ENCODE measurements at regions of chr19 and their contacts with region 1.

Region 1: DNA sequence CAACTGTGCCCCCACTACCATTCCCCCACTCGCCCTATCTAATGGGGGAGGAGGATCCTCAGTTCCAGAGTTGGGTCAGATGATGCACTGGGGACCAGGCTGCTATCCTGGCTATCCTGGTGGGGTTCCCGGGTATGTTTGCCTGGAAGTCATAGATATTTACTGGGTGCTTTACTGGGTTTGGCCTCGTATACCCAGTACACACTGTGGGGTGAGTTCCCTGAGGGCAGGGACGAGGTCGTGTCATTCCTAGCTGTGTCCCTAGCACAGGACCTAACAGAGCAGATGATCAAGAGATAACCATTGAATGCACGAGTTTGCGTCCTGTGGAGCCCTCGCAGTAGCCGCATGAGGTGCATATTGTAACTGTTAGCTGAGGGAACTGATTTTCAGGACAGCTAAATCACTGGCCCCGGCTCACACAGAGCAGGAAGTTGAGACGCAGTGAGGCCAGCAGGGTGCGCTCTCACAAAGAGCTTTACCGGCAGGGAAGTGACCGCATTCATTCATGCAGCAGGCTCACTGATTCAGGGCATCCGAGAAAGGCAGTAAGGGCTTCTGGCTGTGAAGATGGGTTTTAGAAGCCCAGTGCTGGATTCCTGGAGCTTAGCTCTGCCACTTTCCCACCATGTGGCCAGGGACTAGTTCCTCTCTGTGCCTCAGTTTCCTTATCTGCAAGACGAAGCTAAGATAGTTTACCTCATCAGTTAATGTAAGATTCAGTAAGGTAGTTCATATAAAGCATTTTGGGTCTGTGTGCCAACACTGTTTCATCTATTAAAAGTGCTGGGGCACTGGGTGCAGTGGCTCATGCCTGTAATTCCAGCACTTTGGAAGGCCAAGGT is 6.0 kb downstream of the RUVBL2 start:
- DNase-seq: peak; percentile 80
- H3K4me3 Mint-ChIP-seq: no peak overlapping the region
- H3K27ac Mint-ChIP-seq: peak overlapping the region; percentile 19
- H3K4me1 Mint-ChIP-seq: peaks cover 29% of the 10 kb centered on the region
- H3K27me3 Mint-ChIP-seq: no peaks in the 10 kb centered on the region

Region 2: GRCh38 chr19:48907671-48908070 is 92.0 kb before region 1 on chr19:
- CTCF ChIA-PET with region 1: no interaction called
- POLR2A ChIA-PET with region 1: no interaction called
- DNase-seq: no peak
- H3K4me3 Mint-ChIP-seq: no peak overlapping the region
- H3K27ac Mint-ChIP-seq: no peak overlapping the region
- H3K4me1 Mint-ChIP-seq: peaks cover 7% of the 10 kb centered on the region
- H3K27me3 Mint-ChIP-seq: no peaks in the 10 kb centered on the region

Region 3: DNA sequence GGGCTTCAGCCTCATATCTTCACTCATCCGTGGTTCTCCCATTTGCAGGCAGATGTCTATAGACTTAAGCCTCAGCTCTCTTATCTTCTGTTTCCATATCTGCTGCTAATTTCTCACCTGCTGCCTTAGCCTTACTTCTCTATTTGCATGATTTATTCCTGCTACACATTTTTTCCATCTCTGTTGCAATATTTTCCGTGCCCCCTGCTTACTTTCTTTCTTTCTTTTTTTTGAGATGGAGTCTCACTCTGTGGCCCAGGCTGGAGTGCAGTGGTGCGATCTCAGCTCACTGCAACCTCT is 12.3 kb before region 1 on chr19:
- CTCF ChIA-PET with region 1: interaction called, 10 read pairs
- POLR2A ChIA-PET with region 1: interaction called, 6 read pairs
- DNase-seq: no peak
- H3K4me3 Mint-ChIP-seq: no peak overlapping the region
- H3K27ac Mint-ChIP-seq: no peak overlapping the region
- H3K4me1 Mint-ChIP-seq: peaks cover 22% of the 10 kb centered on the region
- H3K27me3 Mint-ChIP-seq: no peaks in the 10 kb centered on the region

Region 4: GRCh38 chr19:49009828-49010227 is 10.1 kb after region 1 on chr19:
- CTCF ChIA-PET with region 1: interaction called, 16 read pairs
- POLR2A ChIA-PET with region 1: no interaction called
- DNase-seq: no peak
- H3K4me3 Mint-ChIP-seq: no peak overlapping the region
- H3K27ac Mint-ChIP-seq: no peak overlapping the region
- H3K4me1 Mint-ChIP-seq: no peaks in the 10 kb centered on the region
- H3K27me3 Mint-ChIP-seq: no peaks in the 10 kb centered on the region

Region 5: GRCh38 chr19:49017666-49018351 is 18.1 kb after region 1 on chr19:
- CTCF ChIA-PET with region 1: interaction called, 52 read pairs
- POLR2A ChIA-PET with region 1: no interaction called
- DNase-seq: peak; percentile 72
- H3K4me3 Mint-ChIP-seq: peak overlapping the region; percentile 82
- H3K27ac Mint-ChIP-seq: no peak overlapping the region
- H3K4me1 Mint-ChIP-seq: peaks cover 38% of the 10 kb centered on the region
- H3K27me3 Mint-ChIP-seq: peaks cover 9% of the 10 kb centered on the region

Region 6: GRCh38 chr19:49387936-49388372 is 388.3 kb after region 1 on chr19 and contains the start of gene KASH5:
- CTCF ChIA-PET with region 1: no interaction called
- POLR2A ChIA-PET with region 1: no interaction called
- DNase-seq: peak; percentile 92
- H3K4me3 Mint-ChIP-seq: peak within 1 kb of the TSS; percentile 62
- H3K27ac Mint-ChIP-seq: peak within 1 kb of the TSS; percentile 65
- H3K4me1 Mint-ChIP-seq: peaks cover 33% of the 10 kb centered on the region
- H3K27me3 Mint-ChIP-seq: peaks cover 14% of the 10 kb centered on the region
- total RNA-seq, gene KASH5: 0.73 to 0.81 TPM

Measured in activated CD4-positive, alpha-beta memory T cell treated with anti-CD3 and anti-CD28 coated beads, Interleukin-2, amount 10 ng/mL, durations not matched to agents 7 days and 5 days (primary cell).